ENCODE measurements at regions of chr11 and their contacts with region 1.

Region 1: DNA sequence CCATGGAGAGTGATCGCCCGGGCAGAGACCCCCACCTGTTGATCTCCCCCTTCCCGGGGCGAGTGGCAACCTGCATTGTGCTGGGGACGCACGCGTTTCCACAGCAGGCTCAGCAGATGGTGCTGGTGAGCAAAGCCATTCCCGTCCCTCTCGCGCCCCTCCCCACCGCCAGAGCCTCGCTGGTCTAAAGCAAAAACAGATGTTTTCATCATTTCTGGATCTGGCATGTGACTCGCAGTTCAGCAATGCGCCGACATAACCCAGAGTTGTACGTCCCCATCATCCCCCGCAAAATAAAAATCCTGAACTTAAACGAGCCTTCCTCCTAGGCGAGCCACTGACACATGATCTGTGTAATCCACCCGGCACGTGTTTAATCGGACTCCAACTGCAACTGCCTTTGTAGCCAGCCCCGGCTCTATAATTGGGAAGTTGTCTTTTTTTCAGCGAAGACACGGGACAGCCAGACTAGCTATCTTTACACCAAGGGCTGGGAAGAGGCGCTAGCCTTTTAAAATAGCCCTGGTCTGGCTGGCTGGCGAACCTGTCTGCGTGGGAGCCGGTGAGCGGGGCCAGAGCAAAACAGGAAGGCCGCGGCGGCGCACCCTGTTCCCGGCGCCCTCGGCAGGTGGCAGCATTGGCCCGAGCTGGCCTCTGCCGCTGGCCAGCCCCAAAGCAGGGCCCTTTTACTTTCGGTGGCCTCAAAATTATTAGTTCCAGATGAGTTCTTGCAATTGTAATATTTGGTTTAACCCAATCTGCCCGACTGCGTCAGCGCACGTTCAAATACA is 203.0 kb upstream of the SORL1-AS1 start:
- DNase-seq: peak; percentile 96
- H3K4me3 ChIP-seq: peak overlapping the region; percentile 47 to 61 (median 51)
- H3K27ac ChIP-seq: peak overlapping the region; percentile 86 to 92 (median 88)
- H3K4me1 ChIP-seq: peaks cover 10 to 34% (median 31%) of the 10 kb centered on the region in 4 donors
- H3K27me3 ChIP-seq: no peaks in the 10 kb centered on the region
- CTCF ChIP-seq: peak; percentile 80 to 93 (median 91)
- EP300 ChIP-seq: peak; percentile 36
- POLR2A ChIP-seq: no peak

Region 2: GRCh38 chr11:121417055-121417551 is 238.6 kb before region 1 on chr11:
- intact Hi-C with region 1: no loop called
- DNase-seq: peak; percentile 95
- H3K4me3 ChIP-seq: no peak overlapping the region
- H3K27ac ChIP-seq: peak overlapping the region; percentile 26 to 75 (median 48)
- H3K4me1 ChIP-seq: peaks cover 23 to 32% (median 26%) of the 10 kb centered on the region in 4 donors
- H3K27me3 ChIP-seq: no peaks in the 10 kb centered on the region
- CTCF ChIP-seq: no peak
- EP300 ChIP-seq: no peak
- POLR2A ChIP-seq: peak; percentile 2

Region 3: GRCh38 chr11:121722431-121723245 is 66.9 kb after region 1 on chr11:
- intact Hi-C with region 1: loop called (anchors 5 kb)
- DNase-seq: peak; percentile 96
- H3K4me3 ChIP-seq: peak overlapping the region; percentile 48 to 62 (median 58)
- H3K27ac ChIP-seq: peak overlapping the region; percentile 90 to 95 (median 92)
- H3K4me1 ChIP-seq: peaks cover 5 to 41% (median 32%) of the 10 kb centered on the region in 4 donors
- H3K27me3 ChIP-seq: no peaks in the 10 kb centered on the region
- CTCF ChIP-seq: peak in 1 of 3 experiments; percentile 20
- EP300 ChIP-seq: peak; percentile 95
- POLR2A ChIP-seq: peak; percentile 66

Region 4: GRCh38 chr11:121757480-121758125 is 101.9 kb after region 1 on chr11:
- intact Hi-C with region 1: no loop called
- DNase-seq: peak; percentile 72
- H3K4me3 ChIP-seq: no peak overlapping the region
- H3K27ac ChIP-seq: no peak overlapping the region
- H3K4me1 ChIP-seq: peaks cover 10 to 26% (median 14%) of the 10 kb centered on the region in 4 donors
- H3K27me3 ChIP-seq: no peaks in the 10 kb centered on the region
- CTCF ChIP-seq: no peak
- EP300 ChIP-seq: no peak
- POLR2A ChIP-seq: no peak

Region 5: DNA sequence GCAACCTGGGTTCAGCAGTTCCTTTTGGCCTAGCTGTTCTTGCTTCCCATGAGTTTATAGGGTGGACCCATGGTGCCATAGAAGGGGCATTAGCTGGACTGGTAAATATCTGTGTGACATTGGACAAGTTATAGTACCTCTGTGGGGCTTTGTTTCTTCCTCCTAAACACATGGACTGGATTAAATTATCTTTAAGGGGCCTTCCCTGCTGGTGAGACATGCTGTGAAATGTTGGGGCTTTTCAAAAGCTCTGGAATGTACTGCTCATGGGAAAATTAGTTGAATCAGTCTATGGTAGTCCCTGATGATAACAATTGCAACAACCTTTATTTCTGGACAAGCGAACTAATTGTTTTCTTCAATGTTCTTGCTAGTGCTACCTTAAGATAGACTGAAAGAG is 184.0 kb after region 1 on chr11:
- intact Hi-C with region 1: loop called (anchors 10 kb)
- DNase-seq: no peak
- H3K4me3 ChIP-seq: no peak overlapping the region
- H3K27ac ChIP-seq: no peak overlapping the region
- H3K4me1 ChIP-seq: peaks cover 0 to 12% (median 6%) of the 10 kb centered on the region in 4 donors
- H3K27me3 ChIP-seq: no peaks in the 10 kb centered on the region
- CTCF ChIP-seq: no peak
- EP300 ChIP-seq: no peak
- POLR2A ChIP-seq: no peak

Region 6: GRCh38 chr11:122020902-122021301 is 365.2 kb after region 1 on chr11:
- intact Hi-C with region 1: loop called (anchors 5 kb)
- DNase-seq: no peak
- H3K4me3 ChIP-seq: no peak overlapping the region
- H3K27ac ChIP-seq: no peak overlapping the region
- H3K4me1 ChIP-seq: peaks cover 0 to 3% (median 0%) of the 10 kb centered on the region in 4 donors
- H3K27me3 ChIP-seq: no peaks in the 10 kb centered on the region
- CTCF ChIP-seq: peak; percentile 39 to 53 (median 49)
- EP300 ChIP-seq: no peak
- POLR2A ChIP-seq: no peak